Heart left ventricle (tissue), 16 donors: ENCODE measurements at regions of chr4 and their contacts with region 1.

Region 1: GRCh38 chr4:128558896-128559679 is 250.4 kb upstream of the JADE1 start:
- DNase-seq: no peak
- ATAC-seq: peak in 3 of 4 donors; percentile 54 to 63 (median 63)
- H3K4me3 ChIP-seq: no peak overlapping the region
- H3K27ac ChIP-seq: peak overlapping the region in 4 of 12 donors; percentile 21 to 74 (median 32)
- H3K4me1 ChIP-seq: peaks cover 0 to 20% (median 2%) of the 10 kb centered on the region in 12 donors
- H3K27me3 ChIP-seq: no peaks in the 10 kb centered on the region
- CTCF ChIP-seq: no peak
- POLR2A ChIP-seq: no peak

Region 2: GRCh38 chr4:127896528-127896927 is 662.6 kb before region 1 on chr4:
- intact Hi-C with region 1: no loop called
- DNase-seq: no peak
- ATAC-seq: no peak
- H3K4me3 ChIP-seq: no peak overlapping the region
- H3K27ac ChIP-seq: no peak overlapping the region
- H3K4me1 ChIP-seq: no peaks in the 10 kb centered on the region
- H3K27me3 ChIP-seq: no peaks in the 10 kb centered on the region
- CTCF ChIP-seq: no peak
- POLR2A ChIP-seq: no peak

Region 3: GRCh38 chr4:128379860-128380259 is 179.2 kb before region 1 on chr4:
- intact Hi-C with region 1: loop called in 1 of 10 experiments (anchors 10 kb)
- DNase-seq: peak in 4 of 5 donors; percentile 35 to 66 (median 48)
- ATAC-seq: peak; percentile 55 to 86 (median 74)
- H3K4me3 ChIP-seq: no peak overlapping the region
- H3K27ac ChIP-seq: no peak overlapping the region
- H3K4me1 ChIP-seq: peaks cover 0 to 8% (median 0%) of the 10 kb centered on the region in 12 donors
- H3K27me3 ChIP-seq: no peaks in the 10 kb centered on the region
- CTCF ChIP-seq: peak; percentile 25 to 66 (median 49)
- POLR2A ChIP-seq: no peak

Region 4: GRCh38 chr4:128410037-128410436 is 149.1 kb before region 1 on chr4:
- intact Hi-C with region 1: no loop called
- DNase-seq: no peak
- ATAC-seq: no peak
- H3K4me3 ChIP-seq: no peak overlapping the region
- H3K27ac ChIP-seq: no peak overlapping the region
- H3K4me1 ChIP-seq: no peaks in the 10 kb centered on the region
- H3K27me3 ChIP-seq: no peaks in the 10 kb centered on the region
- CTCF ChIP-seq: no peak
- POLR2A ChIP-seq: no peak

Region 5: DNA sequence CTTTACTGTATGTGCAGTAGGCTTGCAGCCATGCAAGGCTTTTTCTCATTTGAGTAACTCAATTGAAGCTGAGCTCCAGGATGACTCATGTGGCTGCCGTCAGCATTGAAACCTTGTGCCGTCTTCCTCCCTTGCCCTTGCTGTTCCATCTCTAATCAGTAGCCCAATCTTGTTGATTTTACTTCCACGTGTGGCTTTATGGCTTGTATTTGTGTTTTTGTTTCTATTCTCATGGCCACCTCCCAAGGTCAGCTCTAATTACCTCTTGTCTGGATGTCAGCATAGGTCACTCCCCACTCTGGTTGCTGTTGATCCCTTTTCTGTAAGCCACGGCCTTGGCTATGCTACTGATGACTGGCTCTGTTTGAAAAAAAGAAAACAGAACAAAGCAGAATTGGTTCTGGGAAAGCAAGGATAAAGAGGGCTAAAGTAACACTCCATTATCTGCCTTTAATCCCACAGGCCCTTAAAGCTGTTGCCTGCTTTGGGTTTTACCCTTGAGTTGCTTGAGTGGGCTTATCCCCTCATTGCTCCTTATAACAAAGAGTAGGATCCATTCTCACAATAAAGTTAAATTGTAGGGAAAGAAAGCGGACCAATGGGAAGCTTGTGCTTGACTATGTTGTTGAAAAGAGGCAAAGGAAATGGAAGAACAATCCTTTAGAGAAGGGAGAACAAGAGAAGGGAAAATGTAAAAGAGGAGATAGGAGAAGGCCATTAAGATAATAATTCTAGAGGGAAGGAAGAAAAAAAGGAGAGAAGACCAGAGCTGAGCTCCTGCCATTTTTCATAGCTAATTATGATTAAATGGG is 97.6 kb before region 1 on chr4:
- intact Hi-C with region 1: loop called in 6 of 10 experiments (anchors 5 to 10 kb)
- DNase-seq: peak in 1 of 5 donors; percentile 26
- ATAC-seq: peak; percentile 47 to 79 (median 63)
- H3K4me3 ChIP-seq: no peak overlapping the region
- H3K27ac ChIP-seq: peak overlapping the region in 2 of 12 donors; percentile 21 to 28
- H3K4me1 ChIP-seq: peaks cover 0 to 4% (median 0%) of the 10 kb centered on the region in 12 donors
- H3K27me3 ChIP-seq: no peaks in the 10 kb centered on the region
- CTCF ChIP-seq: no peak
- POLR2A ChIP-seq: no peak

Region 6: DNA sequence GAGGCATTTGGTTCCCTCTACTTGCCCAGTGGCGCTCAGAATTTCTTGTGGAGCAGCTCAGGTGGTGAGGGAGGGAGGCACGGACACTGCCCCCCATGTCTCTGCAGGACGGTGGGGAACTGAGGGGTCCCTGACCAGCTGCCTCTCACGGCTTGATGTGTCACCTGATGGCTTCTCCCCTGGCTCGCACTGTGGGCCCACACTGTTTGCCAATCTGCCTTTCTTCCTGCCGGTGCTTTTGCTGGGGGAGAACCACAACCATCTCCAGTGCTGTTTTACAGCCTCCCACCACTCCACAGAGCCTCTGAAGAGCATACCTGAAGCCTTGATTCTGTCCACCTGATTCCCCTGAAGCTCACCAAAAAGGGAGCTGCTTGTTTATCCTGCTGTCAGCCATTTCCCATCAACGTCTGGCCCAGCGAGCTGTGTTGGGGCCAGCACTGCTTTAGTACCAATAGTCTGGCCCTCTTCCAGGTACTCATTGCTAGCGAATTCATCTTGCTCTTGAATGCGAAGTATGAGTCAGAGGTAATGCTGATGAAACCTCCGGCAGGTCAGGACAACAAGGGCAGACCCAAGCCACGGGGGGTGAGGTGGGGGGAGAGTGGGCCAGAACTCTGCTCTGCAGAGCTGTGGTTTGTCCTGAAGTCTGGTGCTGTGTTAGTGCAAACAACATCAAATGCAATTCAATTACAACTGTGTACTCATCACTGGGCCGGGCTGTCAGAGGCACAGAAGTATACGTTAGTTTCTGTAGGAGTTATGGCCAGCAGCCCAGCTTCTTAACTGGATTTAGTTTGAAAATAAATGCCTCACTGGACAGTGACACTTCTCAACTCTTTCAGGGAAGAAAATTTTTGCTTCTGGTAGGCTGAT is 42.1 kb after region 1 on chr4:
- intact Hi-C with region 1: no loop called
- DNase-seq: peak in 4 of 5 donors; percentile 33 to 77 (median 46)
- ATAC-seq: peak; percentile 79 to 89 (median 84)
- H3K4me3 ChIP-seq: peak overlapping the region in 4 of 12 donors; percentile 6 to 26 (median 6)
- H3K27ac ChIP-seq: peak overlapping the region in 11 of 12 donors; percentile 37 to 81 (median 71)
- H3K4me1 ChIP-seq: peaks cover 0 to 35% (median 24%) of the 10 kb centered on the region in 12 donors
- H3K27me3 ChIP-seq: no peaks in the 10 kb centered on the region
- CTCF ChIP-seq: no peak
- POLR2A ChIP-seq: no peak